Activated B cell treated with CpG ODN at 0.5 μM for 24 hours (primary cell): ENCODE measurements at regions of chr1 and their contacts with region 1.

Region 1: DNA sequence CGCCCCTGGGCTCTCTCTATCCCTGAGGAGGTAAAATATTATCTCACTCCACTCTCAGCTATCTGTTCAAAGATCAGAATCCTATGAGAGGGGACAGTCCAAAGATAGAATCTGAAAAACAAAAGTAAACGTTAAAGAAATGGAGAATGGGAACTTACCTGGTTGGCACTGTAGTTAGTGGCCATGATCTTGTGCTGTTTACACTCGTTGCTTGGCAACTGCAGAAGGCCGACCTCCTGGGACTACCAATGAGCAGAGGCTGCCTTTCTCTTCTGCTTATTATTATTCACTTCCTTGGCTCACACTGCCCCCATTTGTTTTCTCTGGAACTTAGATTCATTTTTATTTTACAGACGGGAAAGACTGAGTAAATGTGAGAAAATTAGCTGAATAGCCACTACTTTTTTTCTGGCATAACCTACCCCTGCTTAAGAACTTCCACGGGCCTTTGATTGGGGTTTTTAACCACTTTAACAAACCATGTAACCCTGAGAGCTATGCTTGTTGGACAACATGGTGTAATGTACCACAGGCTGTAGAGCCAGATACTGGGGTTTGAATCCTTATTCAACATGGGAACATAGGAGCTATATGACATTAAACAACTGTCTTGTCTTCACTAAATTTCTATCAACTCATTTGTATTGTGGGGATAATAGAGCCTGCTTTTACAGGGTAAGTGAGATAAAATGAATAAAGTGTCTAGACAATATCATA is at the start of gene CFAP126:
- DNase-seq: peak; percentile 35
- ATAC-seq: peak; percentile 100
- H3K4me3 Mint-ChIP-seq: peak within 1 kb of the TSS; percentile 17
- H3K27ac Mint-ChIP-seq: peak within 1 kb of the TSS; percentile 81
- H3K4me1 Mint-ChIP-seq: peaks cover 10% of the 10 kb centered on the region
- H3K27me3 Mint-ChIP-seq: no peaks in the 10 kb centered on the region
- CTCF ChIP-seq: no peak
- total RNA-seq, gene CFAP126: not detected in 2 replicates

Region 2: GRCh38 chr1:161305867-161306519 is 61.8 kb before region 1 on chr1:
- CTCF ChIA-PET with region 1: no interaction called
- POLR2A ChIA-PET with region 1: no interaction called
- intact Hi-C with region 1: loop called (anchors 2 kb)
- DNase-seq: peak; percentile 78
- ATAC-seq: peak; percentile 94
- H3K4me3 Mint-ChIP-seq: peak overlapping the region; percentile 99
- H3K27ac Mint-ChIP-seq: peak overlapping the region; percentile 93
- H3K4me1 Mint-ChIP-seq: peaks cover 44% of the 10 kb centered on the region
- H3K27me3 Mint-ChIP-seq: no peaks in the 10 kb centered on the region
- CTCF ChIP-seq: no peak

Region 3: DNA sequence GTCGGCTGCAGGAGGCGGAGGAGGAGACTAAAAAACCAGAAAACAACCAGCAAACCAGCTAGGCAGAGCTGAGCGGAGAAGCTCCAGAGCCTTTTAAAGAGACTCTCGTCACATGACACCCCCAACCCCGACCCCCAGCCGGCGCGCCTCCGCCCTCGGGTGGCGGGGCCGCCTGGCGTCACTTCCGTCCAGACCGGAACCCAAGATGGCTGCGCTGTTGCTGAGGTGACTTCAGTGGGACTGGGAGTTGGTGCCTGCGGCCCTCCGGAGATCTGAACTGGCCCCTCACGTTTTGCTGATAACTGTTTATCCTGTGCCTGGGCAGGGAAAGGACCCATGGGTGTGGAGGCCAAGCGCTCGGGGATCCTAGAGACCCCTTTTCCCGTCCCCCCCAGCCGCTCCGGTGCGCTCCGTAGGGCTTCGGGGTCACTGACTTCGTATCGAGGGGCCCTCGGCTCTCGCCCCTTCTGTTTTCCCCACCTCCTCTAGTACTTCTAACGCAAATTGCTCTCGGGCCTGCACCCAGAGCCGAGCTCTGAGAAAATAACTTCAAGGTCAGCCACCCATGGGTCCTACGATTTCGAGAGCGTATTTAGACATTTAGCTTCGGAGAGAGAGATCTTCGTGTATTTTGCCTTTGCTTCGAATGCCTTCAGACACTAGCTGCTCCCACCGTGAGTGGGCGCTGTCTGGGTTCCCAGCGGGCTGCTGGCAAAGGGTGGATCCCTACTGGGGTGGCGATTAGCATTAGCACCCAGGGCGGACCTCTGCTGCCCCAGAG is 53.5 kb before region 1 on chr1 and contains the start of gene SDHC:
- CTCF ChIA-PET with region 1: no interaction called
- POLR2A ChIA-PET with region 1: no interaction called
- intact Hi-C with region 1: loop called (anchors 2 kb)
- DNase-seq: peak; percentile 83
- ATAC-seq: peak; percentile 97
- H3K4me3 Mint-ChIP-seq: peak within 1 kb of the TSS; percentile 98
- H3K27ac Mint-ChIP-seq: peak within 1 kb of the TSS; percentile 98
- H3K4me1 Mint-ChIP-seq: peaks cover 21% of the 10 kb centered on the region
- H3K27me3 Mint-ChIP-seq: no peaks in the 10 kb centered on the region
- CTCF ChIP-seq: no peak
- total RNA-seq, gene SDHC: 160 and 179 TPM in 2 replicates

Region 4: GRCh38 chr1:161382214-161383019 is 14.6 kb after region 1 on chr1:
- CTCF ChIA-PET with region 1: interaction called, 14 read pairs
- POLR2A ChIA-PET with region 1: no interaction called
- intact Hi-C with region 1: no loop called
- DNase-seq: no peak
- ATAC-seq: peak; percentile 90
- H3K4me3 Mint-ChIP-seq: no peak overlapping the region
- H3K27ac Mint-ChIP-seq: no peak overlapping the region
- H3K4me1 Mint-ChIP-seq: peaks cover 7% of the 10 kb centered on the region
- H3K27me3 Mint-ChIP-seq: no peaks in the 10 kb centered on the region
- CTCF ChIP-seq: no peak